ENCODE measurements at regions of chr15 and their contacts with region 1.

Region 1: DNA sequence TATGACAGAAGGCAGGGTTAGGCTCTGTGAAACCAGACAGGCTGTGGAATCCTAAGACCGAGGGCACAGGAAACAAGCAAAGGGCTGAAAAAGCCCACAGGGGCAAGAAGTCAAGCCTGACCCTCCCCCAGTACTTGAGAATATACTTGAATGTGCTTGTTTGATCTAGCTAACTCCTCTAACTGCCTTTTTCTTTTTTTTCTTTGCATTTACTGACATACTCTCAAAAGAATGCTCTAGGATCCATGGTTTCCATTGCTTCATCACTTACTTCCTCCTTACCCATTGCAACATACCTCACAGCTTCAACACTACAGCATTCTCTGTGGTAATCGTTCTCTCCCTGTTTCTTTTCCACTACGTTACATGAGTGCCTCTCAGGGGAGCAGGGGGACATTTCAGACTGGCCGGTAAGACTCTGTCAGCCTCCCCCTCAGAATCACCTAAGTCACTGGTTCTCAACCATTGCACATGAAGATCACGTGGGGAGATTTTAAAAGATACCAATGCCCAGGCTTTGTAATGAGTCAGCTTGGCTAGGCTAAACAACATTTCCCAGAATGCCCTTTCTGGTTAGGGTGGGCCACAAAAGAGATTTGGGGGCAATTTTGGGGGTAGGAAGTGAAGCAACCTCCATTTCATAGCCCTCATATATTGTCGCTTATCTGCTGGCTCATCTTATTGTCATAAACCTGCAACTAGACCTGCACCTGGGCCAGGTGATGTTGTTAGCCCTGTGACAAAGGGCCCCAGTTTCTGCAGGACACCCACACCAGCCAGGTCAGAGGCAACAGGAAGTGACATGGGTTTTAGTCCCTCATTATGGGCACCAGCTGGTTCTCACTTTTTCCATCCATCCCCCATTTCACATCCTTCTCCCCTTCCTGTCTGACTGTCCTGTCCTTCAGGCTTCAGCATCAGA is 24.6 kb upstream of the RSL24D1 start:
- DNase-seq: peak; percentile 20 to 63
- ATAC-seq: peak; percentile 81 to 82
- H3K4me3 ChIP-seq: no peak overlapping the region
- H3K27ac ChIP-seq: peak overlapping the region; percentile 58 to 82
- H3K4me1 ChIP-seq: peaks cover 21% of the 10 kb centered on the region
- CTCF ChIP-seq: no peak
- EP300 ChIP-seq: 0 out of 5 replicates have a peak, but pooled peaks of 1 of the 2 experiments have one; percentile 15
- POLR2A ChIP-seq: no peak
- RAD21 ChIP-seq: no peak

Region 2: DNA sequence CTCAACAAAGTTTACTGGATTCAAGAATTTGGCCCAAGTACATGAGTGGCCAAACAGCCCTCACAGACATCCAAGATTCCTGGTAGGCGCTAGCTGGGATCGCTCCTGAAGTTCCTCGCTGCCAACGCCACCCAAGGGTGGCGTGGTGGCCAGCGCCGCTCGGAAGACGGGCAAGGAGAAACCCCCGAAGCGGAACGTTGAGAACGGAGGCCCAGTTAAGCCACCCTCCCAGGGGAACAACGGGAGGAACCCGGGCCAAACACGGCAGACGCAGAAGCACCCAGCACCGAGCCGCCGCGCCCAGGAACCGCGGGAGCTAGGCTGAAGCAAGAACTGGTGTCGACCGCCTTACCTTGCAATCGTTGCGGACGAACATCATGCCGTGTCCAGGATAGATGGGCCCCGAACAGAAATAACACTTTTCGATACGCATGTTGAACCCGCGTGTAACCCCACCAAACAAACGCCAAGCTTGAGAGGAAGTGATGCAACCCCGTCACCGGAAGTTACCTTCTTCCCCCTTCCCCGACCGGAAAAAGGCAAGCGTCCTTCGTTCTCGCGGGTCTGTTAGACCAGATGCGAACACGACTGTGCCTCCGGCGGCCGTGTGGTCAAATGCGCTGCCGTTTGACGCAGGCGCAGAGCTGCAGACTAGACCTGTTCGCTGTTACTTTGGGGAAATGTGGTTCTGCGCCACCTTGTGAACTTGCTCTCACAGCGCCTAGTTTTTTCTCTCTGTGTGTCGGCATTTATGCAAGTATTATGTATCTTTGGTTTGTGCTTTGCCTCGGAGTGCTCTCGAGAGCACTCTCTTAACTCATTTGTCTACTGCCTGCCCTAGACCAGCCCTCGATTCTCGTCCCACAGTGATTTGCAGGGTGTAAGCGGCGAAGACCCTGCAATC is 24.6 kb before region 1 on chr15 and contains the start of gene RSL24D1:
- CTCF ChIA-PET with region 1: interaction called, 14 read pairs
- POLR2A ChIA-PET with region 1: interaction called, 6 read pairs
- DNase-seq: peak; percentile 95 to 99
- ATAC-seq: peak; percentile 99
- H3K4me3 ChIP-seq: peak within 1 kb of the TSS; percentile 69
- H3K27ac ChIP-seq: peak within 1 kb of the TSS; percentile 92
- H3K4me1 ChIP-seq: peaks cover 34% of the 10 kb centered on the region
- CTCF ChIP-seq: peak; percentile 45
- EP300 ChIP-seq: no peak
- POLR2A ChIP-seq: peak; percentile 91
- RAD21 ChIP-seq: peak; percentile 14 to 31; a peak in 3 of 5 replicates
- polyA plus RNA-seq, gene RSL24D1: 171 and 257 TPM in 2 replicates

Region 3: GRCh38 chr15:55202206-55202605 is 19.1 kb before region 1 on chr15:
- CTCF ChIA-PET with region 1: interaction called, 16 read pairs
- POLR2A ChIA-PET with region 1: interaction called, 6 read pairs
- DNase-seq: no peak
- ATAC-seq: no peak
- H3K4me3 ChIP-seq: no peak overlapping the region
- H3K27ac ChIP-seq: no peak overlapping the region
- H3K4me1 ChIP-seq: peaks cover 9% of the 10 kb centered on the region; the same call in 2 of the 3 replicates
- CTCF ChIP-seq: no peak
- EP300 ChIP-seq: no peak
- POLR2A ChIP-seq: no peak
- RAD21 ChIP-seq: no peak

Region 4: GRCh38 chr15:55290528-55291057 is 69.2 kb after region 1 on chr15:
- CTCF ChIA-PET with region 1: interaction called, 135 read pairs
- POLR2A ChIA-PET with region 1: interaction called, 3 read pairs
- DNase-seq: peak; percentile 81 to 86
- ATAC-seq: peak; percentile 87 to 94
- H3K4me3 ChIP-seq: peak overlapping the region; percentile 83
- H3K27ac ChIP-seq: peak overlapping the region; percentile 83 to 88
- H3K4me1 ChIP-seq: peaks cover 4% of the 10 kb centered on the region; the same call in 1 of the 3 replicates
- CTCF ChIP-seq: peak; percentile 98
- EP300 ChIP-seq: no peak
- POLR2A ChIP-seq: no peak
- RAD21 ChIP-seq: peak; percentile 92 to 99